Dendritic cell treated with granulocyte-macrophage colony-stimulating factor and Interleukin-4, amounts not matched to agents 40 ng/mL and 50 ng/mL, for 4 days (primary cell): ENCODE measurements at regions of chr6 and their contacts with region 1.

Region 1: DNA sequence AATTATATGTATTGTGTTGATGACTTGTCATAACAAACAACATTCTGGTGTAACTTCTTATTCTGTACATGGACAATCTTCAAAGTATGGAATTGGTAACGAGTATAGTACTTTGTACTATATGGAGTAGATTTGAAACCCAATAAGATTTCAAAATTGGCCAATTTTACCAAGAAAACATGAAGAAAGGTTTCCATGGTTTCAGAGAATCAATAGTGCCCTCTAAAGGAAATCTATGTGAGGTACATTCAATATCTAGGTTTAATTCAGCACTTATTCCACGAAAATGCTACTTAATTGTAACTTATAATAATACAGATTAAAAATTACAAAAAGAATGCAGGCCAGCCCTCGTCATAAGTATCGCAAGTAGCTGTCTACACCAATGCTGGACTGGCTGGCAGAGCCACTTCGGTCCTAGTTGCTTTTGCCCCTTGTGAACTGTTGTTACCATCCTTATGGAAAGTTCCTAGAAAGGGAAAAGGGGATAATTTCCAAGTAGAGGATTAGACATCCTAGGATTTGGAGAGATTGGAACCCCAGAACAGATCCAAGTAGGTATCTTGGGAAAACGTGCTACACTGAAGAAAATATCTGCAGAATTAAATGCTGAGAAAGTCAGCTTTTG is 70.9 kb downstream of the LCA5 start:
- H3K4me3 Mint-ChIP-seq: no peak overlapping the region
- H3K27ac Mint-ChIP-seq: no peak overlapping the region
- H3K4me1 Mint-ChIP-seq: peaks cover 5% of the 10 kb centered on the region
- H3K27me3 Mint-ChIP-seq: no peaks in the 10 kb centered on the region

Region 2: DNA sequence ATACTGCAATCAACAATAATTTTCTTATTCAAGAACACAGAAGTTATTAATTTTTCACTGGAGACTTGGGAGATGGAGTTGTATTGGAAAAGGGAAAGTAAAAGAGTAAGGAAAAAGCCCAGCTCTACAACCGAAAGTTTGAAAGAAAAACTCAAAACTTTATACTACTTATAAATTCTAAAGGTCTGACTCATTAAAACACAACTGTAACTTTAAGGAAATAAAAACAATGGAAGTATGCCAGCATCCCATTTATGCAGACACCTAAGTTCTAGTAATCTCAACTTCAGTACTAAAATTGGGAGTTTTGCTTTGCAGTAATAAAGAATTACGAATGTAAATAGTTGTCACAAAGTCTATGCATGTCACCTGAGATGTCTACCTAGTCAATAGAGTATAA is 518.4 kb before region 1 on chr6:
- intact Hi-C with region 1: no loop called
- H3K4me3 Mint-ChIP-seq: no peak overlapping the region
- H3K27ac Mint-ChIP-seq: no peak overlapping the region
- H3K4me1 Mint-ChIP-seq: peaks cover 9% of the 10 kb centered on the region
- H3K27me3 Mint-ChIP-seq: no peaks in the 10 kb centered on the region

Region 3: DNA sequence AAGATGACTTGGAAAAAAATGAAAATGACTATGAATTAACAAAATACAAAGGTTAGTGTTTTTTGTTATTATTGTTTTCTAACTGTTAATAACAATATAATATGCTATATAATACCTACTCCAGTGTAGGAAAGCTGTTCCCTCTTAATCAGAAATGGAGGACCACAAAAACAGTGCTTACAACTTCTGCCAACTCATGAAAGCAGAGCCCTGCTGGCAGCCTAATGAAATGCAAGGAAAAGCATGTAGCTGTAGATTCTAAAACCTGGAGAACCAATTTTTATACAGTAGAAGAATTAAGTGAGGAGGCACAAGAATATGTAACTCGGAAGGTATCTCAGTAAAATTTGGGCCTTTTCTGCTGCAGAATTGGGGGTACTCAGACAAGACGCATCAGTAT is 417.7 kb before region 1 on chr6:
- intact Hi-C with region 1: no loop called
- H3K4me3 Mint-ChIP-seq: no peak overlapping the region
- H3K27ac Mint-ChIP-seq: no peak overlapping the region
- H3K4me1 Mint-ChIP-seq: no peaks in the 10 kb centered on the region
- H3K27me3 Mint-ChIP-seq: no peaks in the 10 kb centered on the region

Region 4: DNA sequence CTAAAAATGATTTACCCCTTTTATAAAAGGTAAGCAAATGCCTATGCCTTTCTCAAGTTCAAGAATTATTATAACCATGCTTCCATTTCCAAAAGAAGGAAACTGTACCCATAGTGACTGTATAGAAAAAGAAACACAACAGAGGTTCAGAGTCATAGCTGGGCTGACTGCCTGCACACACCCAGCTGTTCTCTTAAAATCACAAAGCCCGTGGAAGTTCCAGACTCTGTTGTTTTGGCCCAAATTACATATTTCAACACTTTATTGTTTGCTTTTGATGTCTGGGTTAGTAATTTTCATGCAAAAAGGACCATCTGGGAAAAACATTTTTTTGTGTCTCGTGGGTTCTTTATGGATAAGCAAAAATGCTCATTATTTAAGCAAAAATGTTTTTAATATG is 28.3 kb before region 1 on chr6:
- intact Hi-C with region 1: no loop called
- H3K4me3 Mint-ChIP-seq: no peak overlapping the region
- H3K27ac Mint-ChIP-seq: no peak overlapping the region
- H3K4me1 Mint-ChIP-seq: no peaks in the 10 kb centered on the region
- H3K27me3 Mint-ChIP-seq: no peaks in the 10 kb centered on the region

Region 5: DNA sequence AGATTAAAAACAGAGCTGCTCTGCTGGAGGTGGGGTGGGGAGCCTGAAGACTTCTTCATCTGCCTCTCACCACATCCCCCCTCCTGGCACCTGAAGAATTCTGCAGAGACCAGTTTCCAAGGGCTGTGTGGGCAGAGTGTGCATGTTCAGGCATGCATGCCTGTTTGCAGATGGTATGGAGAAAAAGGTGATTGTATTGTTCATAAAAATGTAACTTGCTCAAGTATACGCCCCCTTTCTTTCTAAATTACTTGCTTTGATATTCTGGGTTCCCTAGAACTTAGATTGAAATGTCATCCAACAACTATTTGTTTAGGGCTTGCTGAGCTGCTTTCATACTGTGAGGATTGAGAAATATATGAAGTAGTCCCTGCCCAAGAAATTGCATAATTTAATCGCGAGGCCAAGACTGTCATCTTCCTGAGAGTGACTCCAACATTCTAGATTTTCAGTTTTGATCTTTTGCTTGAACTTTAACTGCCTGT is 12.7 kb before region 1 on chr6:
- intact Hi-C with region 1: loop called (anchors 1 kb)
- H3K4me3 Mint-ChIP-seq: no peak overlapping the region
- H3K27ac Mint-ChIP-seq: no peak overlapping the region
- H3K4me1 Mint-ChIP-seq: peaks cover 28% of the 10 kb centered on the region
- H3K27me3 Mint-ChIP-seq: no peaks in the 10 kb centered on the region

Region 6: DNA sequence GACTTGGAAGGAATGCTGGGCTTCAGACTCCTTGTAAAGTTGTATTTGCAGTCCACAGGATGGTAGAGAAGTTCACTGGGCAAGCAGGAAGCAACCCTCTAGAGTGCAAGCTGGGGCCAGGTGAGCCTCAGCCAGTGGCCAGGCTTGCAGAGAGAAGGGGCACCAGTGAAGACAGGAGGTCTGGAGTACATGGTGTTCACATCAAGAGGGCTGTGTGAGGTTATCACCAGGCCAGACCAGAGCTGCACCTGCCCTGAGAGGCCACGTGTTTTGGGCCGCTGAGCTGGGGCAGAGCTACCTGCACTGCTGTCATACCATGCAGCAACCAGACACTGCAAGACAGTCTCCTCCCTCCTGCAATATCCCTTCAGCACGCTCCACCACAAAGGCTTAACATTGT is 243.8 kb after region 1 on chr6:
- intact Hi-C with region 1: no loop called
- H3K4me3 Mint-ChIP-seq: no peak overlapping the region
- H3K27ac Mint-ChIP-seq: no peak overlapping the region
- H3K4me1 Mint-ChIP-seq: no peaks in the 10 kb centered on the region
- H3K27me3 Mint-ChIP-seq: no peaks in the 10 kb centered on the region